Left colon (tissue), 2 donors: ENCODE measurements at regions of chr4 and their contacts with region 1.

Region 1: DNA sequence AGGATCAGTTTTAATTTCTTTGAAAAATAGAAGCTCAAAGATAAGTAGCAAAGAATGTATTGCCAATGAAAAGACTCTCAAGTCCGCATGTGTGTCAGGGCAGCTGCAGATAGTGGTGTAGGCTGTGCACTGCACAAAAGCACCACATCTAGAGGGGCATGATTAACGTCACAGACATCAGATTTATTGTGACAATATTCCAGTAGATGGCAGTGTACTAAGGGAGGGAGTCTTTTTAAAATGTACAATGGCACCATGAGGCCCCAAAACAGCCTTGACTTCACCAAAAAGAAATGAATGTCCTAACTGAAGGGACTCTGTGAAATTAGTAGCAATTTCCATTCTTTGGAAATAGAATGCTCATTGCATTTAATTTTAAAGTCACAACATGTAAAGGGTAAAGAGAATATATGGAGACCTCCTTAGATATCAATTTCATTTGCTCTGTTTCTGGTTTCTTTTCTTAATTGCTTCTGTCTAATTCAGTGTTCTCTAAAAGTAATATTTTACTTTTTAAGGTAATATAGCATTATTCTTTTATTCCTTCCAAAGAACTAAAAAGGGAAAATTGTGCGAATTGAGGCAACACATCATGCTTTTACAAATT is 98.4 kb downstream of the ZNF827 start:
- DNase-seq: no peak
- ATAC-seq: peak; percentile 74

Region 2: DNA sequence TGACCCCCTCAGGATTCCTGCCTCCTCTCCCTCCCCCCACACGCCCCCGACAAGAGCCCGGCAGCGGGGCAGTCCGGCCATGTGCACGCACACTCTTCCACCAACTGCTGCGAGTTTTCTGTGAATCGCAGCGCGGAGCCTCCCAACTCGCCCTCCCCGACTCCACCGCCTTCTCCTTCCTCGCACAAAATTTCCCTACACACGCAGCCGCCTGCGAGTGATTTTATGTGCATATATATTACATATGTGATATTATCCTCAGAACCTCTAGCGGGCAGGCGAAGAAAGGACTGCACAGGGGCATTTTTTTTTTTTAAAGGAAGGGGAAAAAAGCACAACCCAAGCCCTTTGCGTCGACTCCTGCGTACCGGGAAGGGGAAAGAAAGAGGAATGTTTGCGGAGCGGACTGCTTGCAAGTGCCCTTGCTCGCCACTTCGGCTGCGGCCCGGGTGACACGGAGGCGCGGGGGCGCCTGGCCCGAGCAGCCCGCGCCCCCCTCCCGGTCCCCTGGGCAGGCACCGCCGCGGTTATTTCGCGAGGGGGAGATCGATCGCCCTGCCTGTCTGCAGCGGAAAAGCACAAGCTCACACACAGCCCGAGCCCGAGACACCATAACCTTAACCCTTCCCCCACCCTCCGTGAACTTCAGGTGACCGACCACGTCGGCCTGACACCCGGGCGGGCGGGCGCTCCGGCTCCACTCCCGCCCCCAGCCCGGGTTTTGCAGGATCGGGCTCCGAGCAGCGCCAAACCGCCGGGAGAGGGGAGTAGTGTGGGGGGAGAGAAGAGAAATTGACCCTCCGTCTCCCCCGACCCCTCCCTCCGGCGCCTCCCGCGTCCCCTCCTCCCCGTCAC is 96.1 kb after region 1 on chr4:
- intact Hi-C with region 1: loop called in 1 of 2 experiments (anchors 10 kb)
- DNase-seq: peak; percentile 70 to 74
- ATAC-seq: peak; percentile 62